HepG2 (cell line): ENCODE measurements at regions of chr17 and their contacts with region 1.

Region 1: GRCh38 chr17:27879987-27880608 is 13.1 kb downstream of the LYRM9 start:
- DNase-seq: peak; percentile 48
- ATAC-seq: peak; percentile 97
- H3K4me3 ChIP-seq: no peak overlapping the region
- H3K27ac ChIP-seq: no peak overlapping the region
- H3K4me1 ChIP-seq: no peaks in the 10 kb centered on the region
- H3K27me3 ChIP-seq: no peaks in the 10 kb centered on the region; a peak in 1 of 5 replicates
- CTCF ChIP-seq: peak; percentile 92
- EP300 ChIP-seq: no peak
- POLR2A ChIP-seq: no peak
- RAD21 ChIP-seq: peak; percentile 85

Region 2: DNA sequence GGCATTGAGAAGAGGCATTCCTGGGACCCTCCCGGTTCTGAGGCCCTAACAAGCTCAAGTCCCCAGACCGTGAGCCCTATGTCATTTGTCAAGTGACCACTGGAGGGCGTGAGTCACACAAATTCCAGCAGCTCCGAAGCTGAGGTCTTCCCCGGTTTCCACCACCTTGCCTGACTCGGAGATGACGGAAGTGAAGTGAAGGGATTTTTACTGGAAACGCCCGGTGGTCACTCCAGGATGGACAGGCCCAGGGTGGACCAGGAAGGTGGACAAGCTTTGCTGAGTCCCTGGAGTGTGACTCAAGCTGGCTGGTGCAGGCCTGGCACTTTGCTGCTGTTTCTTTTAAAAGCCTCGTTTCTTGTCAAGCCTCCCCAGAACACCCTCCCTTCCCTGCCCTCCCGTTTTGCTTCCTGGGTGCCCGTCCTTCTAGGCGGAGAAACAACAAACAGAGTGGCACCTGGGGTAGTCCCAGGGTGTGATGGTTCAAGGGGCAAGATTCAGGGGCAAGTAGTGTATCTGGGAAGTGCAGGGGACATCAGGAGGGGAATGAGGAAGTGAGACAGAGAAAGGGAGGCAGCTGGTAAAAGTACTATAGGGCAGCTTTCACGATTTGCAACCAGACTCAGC is 74.5 kb before region 1 on chr17:
- CTCF ChIA-PET with region 1: interaction called, 46 read pairs
- POLR2A ChIA-PET with region 1: interaction called, 12 read pairs
- in situ Hi-C with region 1: loop called (anchors 5 kb)
- intact Hi-C with region 1: loop called (anchors 1 kb)
- DNase-seq: peak; percentile 78
- ATAC-seq: peak; percentile 94
- H3K4me3 ChIP-seq: peak overlapping the region; percentile 23 to 55 (median 27); a peak in 3 of 6 replicates
- H3K27ac ChIP-seq: no peak overlapping the region
- H3K4me1 ChIP-seq: peaks cover 17% of the 10 kb centered on the region
- H3K27me3 ChIP-seq: 0 out of 5 replicates have a peak, but pooled peaks cover 0 to 1% of the 10 kb centered on the region in 2 experiments
- CTCF ChIP-seq: peak; percentile 95
- EP300 ChIP-seq: no peak
- POLR2A ChIP-seq: no peak
- RAD21 ChIP-seq: peak; percentile 78

Region 3: DNA sequence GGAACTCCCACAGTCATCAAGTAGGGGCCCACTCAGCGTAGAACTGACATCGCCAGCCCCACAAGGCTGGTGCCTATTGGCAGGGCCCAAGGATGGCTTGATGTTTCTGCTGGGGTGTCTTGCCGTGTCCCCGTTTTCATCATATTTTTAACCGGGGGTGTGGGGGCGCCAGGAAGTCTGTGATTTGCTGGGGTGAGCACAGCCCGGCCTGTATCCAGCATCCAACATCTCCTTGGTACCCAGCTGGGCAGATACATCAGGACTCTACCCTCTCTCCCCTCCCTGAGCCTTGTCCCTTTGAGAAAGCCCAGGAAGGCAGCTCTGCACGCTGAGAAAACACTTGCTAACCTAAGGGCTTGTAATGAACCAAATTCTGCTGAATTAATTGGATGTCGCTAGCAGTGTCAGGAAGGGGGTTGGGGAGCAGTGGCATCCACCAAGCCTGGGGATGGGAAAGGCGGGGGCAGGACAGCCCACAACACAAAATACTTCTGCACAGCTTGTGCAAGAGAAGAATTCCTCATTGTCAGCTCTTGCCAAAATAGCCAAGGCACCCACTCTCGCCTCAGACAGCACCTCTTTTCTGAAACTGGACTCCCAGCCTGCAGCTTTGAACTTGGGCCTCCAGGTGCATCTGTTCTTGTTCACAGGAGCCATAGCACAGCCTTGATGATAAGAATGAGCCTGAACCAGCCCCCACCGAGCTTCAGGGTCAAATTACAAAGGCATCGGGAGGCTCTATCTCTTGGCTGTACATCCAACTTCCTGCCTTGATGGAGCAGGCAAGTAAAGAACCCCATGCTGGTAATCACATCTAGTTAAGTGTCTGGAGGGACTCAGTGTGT is 76.7 kb after region 1 on chr17:
- CTCF ChIA-PET with region 1: no interaction called
- POLR2A ChIA-PET with region 1: no interaction called
- in situ Hi-C with region 1: no loop called
- intact Hi-C with region 1: no loop called
- DNase-seq: no peak
- ATAC-seq: peak; percentile 36; the same call in 1 of the 3 replicates
- H3K4me3 ChIP-seq: no peak overlapping the region
- H3K27ac ChIP-seq: no peak overlapping the region
- H3K4me1 ChIP-seq: no peaks in the 10 kb centered on the region
- H3K27me3 ChIP-seq: peaks cover 0 to 21% of the 10 kb centered on the region in 2 experiments; a peak in 3 of 5 replicates
- CTCF ChIP-seq: no peak
- EP300 ChIP-seq: no peak
- POLR2A ChIP-seq: no peak
- RAD21 ChIP-seq: no peak